ENCODE measurements at regions of chr7 and their contacts with region 1.

Region 1: GRCh38 chr7:50206453-50207250 is 97.9 kb upstream of the IKZF1 start:
- DNase-seq: peak; percentile 11
- H3K27ac ChIP-seq: no peak overlapping the region
- CTCF ChIP-seq: no peak

Region 2: GRCh38 chr7:50221028-50221427 is 14.4 kb after region 1 on chr7:
- CTCF ChIA-PET with region 1: no interaction called
- POLR2A ChIA-PET with region 1: no interaction called
- DNase-seq: no peak
- H3K27ac ChIP-seq: no peak overlapping the region
- CTCF ChIP-seq: no peak

Region 3: DNA sequence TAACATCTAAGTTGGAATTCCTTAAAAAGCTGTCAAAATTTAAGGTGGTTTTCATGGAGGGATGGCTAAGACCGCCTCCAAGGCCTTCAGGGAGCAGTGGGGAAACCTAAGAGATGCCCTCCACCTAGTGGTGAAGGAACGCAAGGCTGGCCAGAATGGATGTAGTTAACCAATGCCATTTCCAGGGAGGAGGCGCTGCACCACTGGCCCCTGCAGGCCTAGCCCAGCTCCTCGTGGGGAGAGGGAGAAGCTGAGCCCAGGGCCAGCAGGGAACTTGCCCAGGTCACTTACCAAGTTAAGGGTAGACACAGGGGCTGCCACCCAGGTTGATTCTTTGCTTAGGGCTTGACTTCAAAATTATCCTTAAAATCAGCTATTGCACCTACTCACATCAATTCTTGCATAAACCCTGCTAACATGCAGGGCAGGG is 211.4 kb after region 1 on chr7:
- CTCF ChIA-PET with region 1: interaction called, 41 read pairs
- POLR2A ChIA-PET with region 1: no interaction called
- DNase-seq: peak; percentile 80
- H3K27ac ChIP-seq: no peak overlapping the region
- CTCF ChIP-seq: peak; percentile 93